ENCODE measurements at regions of chr12 and their contacts with region 1.

Region 1: DNA sequence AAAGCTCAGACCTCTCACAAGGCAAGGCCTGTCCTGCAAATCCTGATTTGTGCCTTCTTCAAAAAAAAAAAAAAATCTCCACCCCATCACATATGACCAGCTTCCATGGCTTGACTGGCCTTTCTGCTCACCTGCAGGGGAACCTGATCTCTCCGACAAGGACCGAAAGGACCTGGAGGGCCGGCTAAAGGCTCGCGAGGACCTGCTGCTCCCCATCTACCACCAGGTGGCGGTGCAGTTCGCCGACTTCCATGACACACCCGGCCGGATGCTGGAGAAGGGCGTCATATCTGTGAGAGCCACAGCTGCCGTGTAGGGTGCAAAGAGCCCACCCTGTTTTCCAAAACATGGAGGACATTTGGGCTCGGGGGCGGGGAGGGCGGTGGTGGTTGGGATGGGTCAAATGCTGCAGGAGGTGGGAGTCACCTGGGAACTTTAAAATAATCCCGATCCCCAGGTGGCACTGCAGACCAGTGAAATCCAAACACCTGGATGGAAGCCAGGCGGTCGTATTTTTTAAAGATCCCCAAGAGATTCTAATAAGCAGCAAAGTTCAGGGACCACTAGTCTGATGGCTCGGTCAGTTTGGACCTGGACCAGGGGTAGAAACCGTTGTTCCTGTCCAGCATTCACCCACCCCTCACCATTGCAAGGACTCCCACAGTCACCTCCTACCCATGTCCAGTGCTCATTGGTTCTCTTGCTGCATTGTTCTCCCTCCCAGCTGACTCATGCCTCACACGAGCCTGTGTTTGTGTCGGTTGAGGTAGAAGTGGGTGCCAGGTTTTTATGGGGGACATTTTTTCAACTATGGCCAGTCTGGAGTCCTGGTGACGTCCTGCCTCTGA is 44.8 kb downstream of the FOXN4 start:
- DNase-seq: peak; percentile 74
- H3K4me3 ChIP-seq: no peak overlapping the region
- H3K27ac ChIP-seq: no peak overlapping the region
- H3K4me1 ChIP-seq: no peaks in the 10 kb centered on the region
- H3K27me3 ChIP-seq: no peaks in the 10 kb centered on the region
- CTCF ChIP-seq: peak; percentile 74 to 78 (median 75)
- POLR2A ChIP-seq: no peak

Region 2: DNA sequence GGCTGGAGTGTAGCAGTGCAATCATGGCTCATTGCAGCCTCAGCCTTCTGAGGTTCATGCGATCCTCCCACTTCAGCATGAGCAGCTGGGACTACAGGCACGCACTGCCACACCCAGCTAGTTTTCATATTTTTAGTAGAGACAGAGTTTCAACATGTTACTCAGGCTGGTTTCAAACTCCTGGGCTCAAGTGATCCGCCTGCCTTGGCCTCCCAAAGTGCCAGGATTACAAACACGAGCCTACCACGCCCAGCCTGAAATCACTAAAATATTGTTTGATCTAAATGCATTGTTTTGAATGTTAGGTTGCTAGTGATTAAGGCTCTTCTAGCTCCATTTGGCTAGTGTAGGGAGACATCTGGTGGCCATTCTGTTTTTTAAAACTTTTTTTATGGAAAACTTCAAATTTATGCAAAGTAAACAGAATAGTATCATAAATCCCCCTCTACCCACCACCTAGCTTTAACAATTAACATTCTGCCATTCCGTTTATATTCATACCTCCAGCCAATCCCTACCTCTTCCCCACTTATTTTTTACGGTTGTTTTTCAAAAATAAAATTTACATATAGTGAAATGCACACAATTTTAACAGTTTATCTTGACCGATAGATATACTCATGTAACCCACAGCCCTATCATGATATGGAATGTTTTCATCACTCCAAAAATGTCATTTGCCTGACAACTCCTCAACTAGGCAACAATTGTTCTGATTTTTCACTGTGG is 121.2 kb after region 1 on chr12:
- intact Hi-C with region 1: loop called (anchors 10 kb)
- DNase-seq: peak; percentile 24
- H3K4me3 ChIP-seq: no peak overlapping the region
- H3K27ac ChIP-seq: no peak overlapping the region
- H3K4me1 ChIP-seq: no peaks in the 10 kb centered on the region
- H3K27me3 ChIP-seq: no peaks in the 10 kb centered on the region
- CTCF ChIP-seq: peak; percentile 38 to 69 (median 55)
- POLR2A ChIP-seq: no peak